HCT116 (cell line): ENCODE measurements at regions of chr6 and their contacts with region 1.

Region 1: GRCh38 chr6:158026054-158026900 is 44.6 kb downstream of the SYNJ2 start:
- DNase-seq: no peak
- ATAC-seq: peak; percentile 79
- H3K4me3 ChIP-seq: peak overlapping the region in 1 of 2 experiments; percentile 24; a peak in 2 of 4 replicates
- H3K27ac ChIP-seq: peak overlapping the region; percentile 61
- H3K4me1 ChIP-seq: peaks cover 30 to 57% of the 10 kb centered on the region in 2 experiments
- H3K27me3 ChIP-seq: no peaks in the 10 kb centered on the region
- CTCF ChIP-seq: peak in 2 of 3 experiments; percentile 59 to 69; a peak in 4 of 6 replicates
- POLR2A ChIP-seq: no peak
- RAD21 ChIP-seq: peak; percentile 12; the same call in 1 of the 2 replicates

Region 2: DNA sequence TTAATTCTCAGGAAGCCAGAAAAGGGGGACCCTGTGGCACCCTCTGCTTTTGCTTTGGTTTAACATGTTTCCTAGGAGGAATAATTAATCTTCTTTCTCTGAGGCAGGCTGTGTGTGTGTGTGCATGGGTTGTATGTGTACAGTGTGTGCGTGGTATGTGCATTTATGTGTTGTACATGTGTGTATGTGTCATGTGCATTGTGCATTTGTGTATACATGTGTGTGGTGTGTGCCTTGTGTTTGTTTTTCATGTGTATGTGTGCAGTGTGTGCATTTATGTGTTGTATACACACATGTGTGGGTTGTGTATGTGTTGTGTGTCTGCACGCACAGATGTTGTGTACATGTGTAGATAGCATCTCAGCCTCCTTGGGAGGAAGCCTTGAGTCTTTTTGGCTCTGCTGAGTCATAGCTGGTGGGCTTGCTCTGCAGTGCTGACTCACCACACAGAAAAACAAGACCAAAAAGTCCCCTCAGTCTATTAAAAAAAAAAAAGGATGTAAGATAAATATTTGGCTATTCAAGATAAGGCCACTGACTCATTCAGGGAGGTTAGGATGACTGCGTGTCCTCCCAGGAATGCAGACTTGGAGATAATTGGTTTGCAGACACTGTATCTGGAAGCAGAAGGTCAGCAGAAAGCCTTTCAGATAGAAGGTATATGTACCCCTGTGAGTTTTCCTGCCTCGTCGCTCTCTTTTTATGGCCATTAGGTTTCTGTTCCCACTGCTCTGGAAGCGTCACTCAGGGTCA is 13.9 kb after region 1 on chr6:
- CTCF ChIA-PET with region 1: interaction called, 13 read pairs
- POLR2A ChIA-PET with region 1: interaction called, 5 read pairs
- RAD21 ChIA-PET with region 1: no interaction called
- intact Hi-C with region 1: no loop called
- DNase-seq: peak; percentile 83
- ATAC-seq: peak; percentile 56
- H3K4me3 ChIP-seq: peak overlapping the region; percentile 15 to 27
- H3K27ac ChIP-seq: peak overlapping the region; percentile 87
- H3K4me1 ChIP-seq: peaks cover 67 to 74% of the 10 kb centered on the region in 2 experiments
- H3K27me3 ChIP-seq: no peaks in the 10 kb centered on the region
- CTCF ChIP-seq: no peak
- POLR2A ChIP-seq: no peak
- RAD21 ChIP-seq: no peak

Region 3: GRCh38 chr6:158060455-158061360 is 34.4 kb after region 1 on chr6:
- CTCF ChIA-PET with region 1: no interaction called
- POLR2A ChIA-PET with region 1: interaction called, 6 read pairs
- RAD21 ChIA-PET with region 1: no interaction called
- intact Hi-C with region 1: loop called (anchors 1 kb)
- DNase-seq: no peak
- ATAC-seq: peak; percentile 65
- H3K4me3 ChIP-seq: peak overlapping the region in 1 of 2 experiments; percentile 23; a peak in 2 of 4 replicates
- H3K27ac ChIP-seq: peak overlapping the region; percentile 85
- H3K4me1 ChIP-seq: peaks cover 45 to 63% of the 10 kb centered on the region in 2 experiments
- H3K27me3 ChIP-seq: no peaks in the 10 kb centered on the region
- CTCF ChIP-seq: no peak
- POLR2A ChIP-seq: no peak
- RAD21 ChIP-seq: no peak; the same call in 1 of the 2 replicates